CD4-positive, alpha-beta memory T cell (primary cell): ENCODE measurements at regions of chr15 and their contacts with region 1.

Region 1: GRCh38 chr15:52658955-52659354 is 20.2 kb downstream of the ATOSA start:
- DNase-seq: peak; percentile 37 to 47 (median 45)
- H3K4me3 ChIP-seq: no peak overlapping the region
- H3K4me3 Mint-ChIP-seq: peak overlapping the region in 5 of 8 donors; percentile 17 to 68 (median 48)
- H3K27ac ChIP-seq: no peak overlapping the region
- H3K27ac Mint-ChIP-seq: peak overlapping the region; percentile 37 to 78 (median 63)
- H3K4me1 ChIP-seq: peaks cover 13% of the 10 kb centered on the region
- H3K4me1 Mint-ChIP-seq: peaks cover 29 to 63% (median 34%) of the 10 kb centered on the region in 4 donors
- H3K27me3 ChIP-seq: no peaks in the 10 kb centered on the region
- H3K27me3 Mint-ChIP-seq: no peaks in the 10 kb centered on the region

Region 2: GRCh38 chr15:52523192-52523591 is 135.8 kb before region 1 on chr15:
- CTCF ChIA-PET with region 1: no interaction called
- POLR2A ChIA-PET with region 1: no interaction called
- intact Hi-C with region 1: no loop called
- DNase-seq: no peak
- H3K4me3 ChIP-seq: no peak overlapping the region
- H3K4me3 Mint-ChIP-seq: no peak overlapping the region
- H3K27ac ChIP-seq: no peak overlapping the region
- H3K27ac Mint-ChIP-seq: peak overlapping the region in 6 of 7 donors; percentile 1 to 50 (median 22)
- H3K4me1 ChIP-seq: peaks cover 28% of the 10 kb centered on the region
- H3K4me1 Mint-ChIP-seq: peaks cover 58 to 70% (median 61%) of the 10 kb centered on the region in 4 donors
- H3K27me3 ChIP-seq: no peaks in the 10 kb centered on the region
- H3K27me3 Mint-ChIP-seq: no peaks in the 10 kb centered on the region

Region 3: GRCh38 chr15:52642386-52643361 is 16.3 kb before region 1 on chr15:
- CTCF ChIA-PET with region 1: no interaction called
- POLR2A ChIA-PET with region 1: no interaction called
- intact Hi-C with region 1: no loop called
- DNase-seq: no peak
- H3K4me3 ChIP-seq: no peak overlapping the region
- H3K4me3 Mint-ChIP-seq: no peak overlapping the region
- H3K27ac ChIP-seq: no peak overlapping the region
- H3K27ac Mint-ChIP-seq: peak overlapping the region in 5 of 7 donors; percentile 24 to 80 (median 59)
- H3K4me1 ChIP-seq: no peaks in the 10 kb centered on the region
- H3K4me1 Mint-ChIP-seq: peaks cover 7 to 11% (median 9%) of the 10 kb centered on the region in 4 donors
- H3K27me3 ChIP-seq: no peaks in the 10 kb centered on the region
- H3K27me3 Mint-ChIP-seq: no peaks in the 10 kb centered on the region

Region 4: DNA sequence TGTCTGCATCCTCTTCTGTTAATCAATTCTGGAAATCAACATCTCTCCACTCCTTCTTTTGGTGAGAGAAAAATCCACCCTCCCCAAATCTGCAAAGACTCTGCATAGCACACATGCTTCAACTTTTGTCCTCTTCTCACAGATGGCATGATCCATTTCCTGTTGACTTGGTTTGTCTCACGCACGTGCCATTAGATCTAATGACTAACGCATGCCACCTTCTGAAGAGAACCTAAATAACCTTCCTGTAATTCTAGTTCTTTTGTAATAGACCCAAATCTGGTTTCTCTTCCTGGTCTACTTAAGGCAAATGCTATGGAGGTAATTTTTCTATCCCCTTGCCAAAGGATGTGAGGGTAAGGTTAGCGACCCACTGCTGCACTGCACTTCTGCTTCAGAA is 71.2 kb after region 1 on chr15:
- CTCF ChIA-PET with region 1: interaction called, 6 read pairs
- POLR2A ChIA-PET with region 1: no interaction called
- intact Hi-C with region 1: loop called (anchors 2 kb)
- DNase-seq: peak; percentile 57 to 75 (median 73)
- H3K4me3 ChIP-seq: no peak overlapping the region
- H3K4me3 Mint-ChIP-seq: peak overlapping the region in 5 of 8 donors; percentile 16 to 64 (median 41)
- H3K27ac ChIP-seq: no peak overlapping the region
- H3K27ac Mint-ChIP-seq: peak overlapping the region; percentile 51 to 91 (median 80)
- H3K4me1 ChIP-seq: peaks cover 16% of the 10 kb centered on the region
- H3K4me1 Mint-ChIP-seq: peaks cover 8 to 21% (median 14%) of the 10 kb centered on the region in 4 donors
- H3K27me3 ChIP-seq: no peaks in the 10 kb centered on the region
- H3K27me3 Mint-ChIP-seq: peaks cover 0 to 2% of the 10 kb centered on the region in 2 donors

Region 5: DNA sequence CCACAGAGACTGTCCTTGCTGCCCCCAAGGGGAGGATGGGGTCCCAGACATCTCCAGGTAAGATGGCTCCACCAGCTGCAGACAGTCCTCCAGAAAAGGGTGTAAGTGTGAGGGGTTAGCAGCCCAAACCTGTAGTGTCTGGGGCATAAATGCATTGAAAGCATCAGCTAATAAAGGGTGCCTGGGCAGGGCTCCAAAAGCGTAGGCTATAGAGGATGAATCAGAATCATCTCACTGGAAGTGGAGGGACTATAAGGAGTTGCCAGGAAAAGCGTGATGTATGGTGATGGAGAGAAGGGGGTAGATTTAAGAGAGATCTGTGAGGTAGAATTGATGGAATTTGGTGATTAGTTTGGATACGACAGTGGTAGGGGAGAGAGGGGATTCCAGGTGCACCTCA is 211.1 kb after region 1 on chr15:
- CTCF ChIA-PET with region 1: no interaction called
- POLR2A ChIA-PET with region 1: no interaction called
- intact Hi-C with region 1: no loop called
- DNase-seq: no peak
- H3K4me3 ChIP-seq: no peak overlapping the region
- H3K4me3 Mint-ChIP-seq: no peak overlapping the region
- H3K27ac ChIP-seq: no peak overlapping the region
- H3K27ac Mint-ChIP-seq: no peak overlapping the region
- H3K4me1 ChIP-seq: no peaks in the 10 kb centered on the region
- H3K4me1 Mint-ChIP-seq: no peaks in the 10 kb centered on the region
- H3K27me3 ChIP-seq: no peaks in the 10 kb centered on the region
- H3K27me3 Mint-ChIP-seq: peaks cover 6 to 17% of the 10 kb centered on the region in 2 donors